Pancreas (tissue), 10 donors: ENCODE measurements at regions of chr9 and their contacts with region 1.

Region 1: GRCh38 chr9:123360161-123361085 is 4.4 kb downstream of the CRB2 start:
- DNase-seq: peak in 5 of 6 donors; percentile 54 to 79 (median 60)
- ATAC-seq: peak; percentile 38 to 86 (median 55)
- H3K4me3 ChIP-seq: no peak overlapping the region
- H3K27ac ChIP-seq: no peak overlapping the region
- H3K4me1 ChIP-seq: no peaks in the 10 kb centered on the region
- H3K27me3 ChIP-seq: no peaks in the 10 kb centered on the region
- CTCF ChIP-seq: no peak

Region 2: DNA sequence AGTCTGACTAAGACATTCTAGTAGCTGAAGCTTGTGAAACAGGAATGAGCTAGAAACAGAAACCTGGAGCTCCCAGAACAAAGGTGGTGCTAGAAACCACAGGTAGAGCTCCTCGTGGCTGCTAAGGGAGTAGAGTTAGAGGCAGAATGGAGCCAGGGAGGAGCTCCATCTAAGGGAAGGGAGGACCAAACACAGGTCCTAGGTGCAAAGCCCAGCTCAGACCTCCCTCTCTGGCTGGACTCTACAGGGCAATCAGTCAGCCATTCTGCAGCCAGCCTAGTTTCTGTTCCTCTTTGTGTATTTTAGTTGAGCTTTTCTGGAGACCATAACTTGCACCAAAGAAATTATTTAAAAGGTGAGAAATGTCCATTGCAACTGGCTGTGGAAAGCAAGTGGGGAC is 66.0 kb after region 1 on chr9:
- intact Hi-C with region 1: loop called in 1 of 3 experiments (anchors 10 kb)
- DNase-seq: no peak
- ATAC-seq: no peak
- H3K4me3 ChIP-seq: no peak overlapping the region
- H3K27ac ChIP-seq: no peak overlapping the region
- H3K4me1 ChIP-seq: no peaks in the 10 kb centered on the region
- H3K27me3 ChIP-seq: no peaks in the 10 kb centered on the region
- CTCF ChIP-seq: no peak

Region 3: GRCh38 chr9:123608104-123608503 is 247.7 kb after region 1 on chr9:
- intact Hi-C with region 1: no loop called
- DNase-seq: no peak
- ATAC-seq: no peak
- H3K4me3 ChIP-seq: no peak overlapping the region
- H3K27ac ChIP-seq: no peak overlapping the region
- H3K4me1 ChIP-seq: no peaks in the 10 kb centered on the region
- H3K27me3 ChIP-seq: no peaks in the 10 kb centered on the region
- CTCF ChIP-seq: no peak